ENCODE measurements at regions of chr10 and their contacts with region 1.

Region 1: GRCh38 chr10:124911124-124912067 is 30.5 kb upstream of the ZRANB1 start:
- DNase-seq: no peak
- H3K4me3 ChIP-seq: peak overlapping the region in 1 of 2 donors; percentile 30
- H3K27ac ChIP-seq: peak overlapping the region; percentile 86 to 87
- H3K4me1 ChIP-seq: peaks cover 3 to 26% of the 10 kb centered on the region in 2 donors
- H3K27me3 ChIP-seq: no peaks in the 10 kb centered on the region
- CTCF ChIP-seq: no peak

Region 2: GRCh38 chr10:124791378-124792348 is 119.7 kb before region 1 on chr10 and contains the start of gene EEF1AKMT2:
- intact Hi-C with region 1: loop called (anchors 5 kb)
- DNase-seq: peak; percentile 20 to 88
- H3K4me3 ChIP-seq: peak within 1 kb of the TSS; percentile 81 to 94
- H3K27ac ChIP-seq: peak within 1 kb of the TSS; percentile 75 to 93
- H3K4me1 ChIP-seq: peaks cover 3 to 6% of the 10 kb centered on the region in 2 donors
- H3K27me3 ChIP-seq: no peaks in the 10 kb centered on the region
- CTCF ChIP-seq: peak; percentile 28 to 66 (median 54)
- total RNA-seq, gene EEF1AKMT2: 10.5 TPM

Region 3: DNA sequence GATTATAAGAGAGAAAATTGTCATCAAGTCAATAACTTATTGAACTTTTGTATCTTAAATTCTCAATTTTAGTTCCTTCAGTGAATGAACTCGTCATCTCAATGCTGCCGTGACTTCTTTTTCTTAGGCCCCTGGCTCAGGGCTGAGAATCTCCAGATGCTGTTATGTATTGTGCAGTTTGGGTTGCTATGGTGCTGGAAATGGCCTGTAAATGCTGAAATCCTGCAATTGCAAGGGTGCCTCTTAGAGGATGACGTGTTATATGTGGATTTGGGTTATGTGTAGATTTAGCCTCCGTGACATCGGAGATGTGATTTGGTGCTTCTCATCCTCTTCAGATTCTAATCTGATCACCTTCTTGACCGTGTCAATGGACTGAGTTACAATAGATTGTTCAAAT is 25.2 kb before region 1 on chr10:
- intact Hi-C with region 1: no loop called
- DNase-seq: no peak
- H3K4me3 ChIP-seq: no peak overlapping the region
- H3K27ac ChIP-seq: no peak overlapping the region
- H3K4me1 ChIP-seq: no peaks in the 10 kb centered on the region
- H3K27me3 ChIP-seq: no peaks in the 10 kb centered on the region
- CTCF ChIP-seq: no peak